Activated naive CD4-positive, alpha-beta T cell treated with anti-CD3 and anti-CD28 coated beads for 36 hours (primary cell): ENCODE measurements at regions of chr4 and their contacts with region 1.

Region 1: GRCh38 chr4:110193822-110194761 is 4.3 kb downstream of the ELOVL6 start:
- DNase-seq: peak; percentile 92
- H3K4me3 Mint-ChIP-seq: peak overlapping the region; percentile 54
- H3K27ac Mint-ChIP-seq: peak overlapping the region; percentile 95
- H3K4me1 Mint-ChIP-seq: peaks cover 31% of the 10 kb centered on the region
- H3K27me3 Mint-ChIP-seq: no peaks in the 10 kb centered on the region

Region 2: GRCh38 chr4:108620101-108620932 is 1573.8 kb before region 1 on chr4 and contains the start of gene RPL34:
- CTCF ChIA-PET with region 1: no interaction called
- intact Hi-C with region 1: loop called (anchors 10 kb)
- DNase-seq: peak; percentile 99
- H3K4me3 Mint-ChIP-seq: peak within 1 kb of the TSS; percentile 93
- H3K27ac Mint-ChIP-seq: peak within 1 kb of the TSS; percentile 95
- H3K4me1 Mint-ChIP-seq: peaks cover 45% of the 10 kb centered on the region
- H3K27me3 Mint-ChIP-seq: no peaks in the 10 kb centered on the region
- total RNA-seq, gene RPL34: 1,983 to 2,004 TPM

Region 3: GRCh38 chr4:109046471-109047201 is 1147.5 kb before region 1 on chr4:
- CTCF ChIA-PET with region 1: no interaction called
- intact Hi-C with region 1: no loop called
- DNase-seq: no peak
- H3K4me3 Mint-ChIP-seq: no peak overlapping the region
- H3K27ac Mint-ChIP-seq: no peak overlapping the region
- H3K4me1 Mint-ChIP-seq: peaks cover 7% of the 10 kb centered on the region
- H3K27me3 Mint-ChIP-seq: no peaks in the 10 kb centered on the region

Region 4: GRCh38 chr4:109648266-109648996 is 545.7 kb before region 1 on chr4:
- CTCF ChIA-PET with region 1: no interaction called
- intact Hi-C with region 1: loop called (anchors 5 kb)
- DNase-seq: no peak
- H3K4me3 Mint-ChIP-seq: peak overlapping the region; percentile 59
- H3K27ac Mint-ChIP-seq: peak overlapping the region; percentile 77
- H3K4me1 Mint-ChIP-seq: peaks cover 45% of the 10 kb centered on the region
- H3K27me3 Mint-ChIP-seq: no peaks in the 10 kb centered on the region

Region 5: GRCh38 chr4:110005461-110006056 is 188.5 kb before region 1 on chr4:
- CTCF ChIA-PET with region 1: no interaction called
- intact Hi-C with region 1: loop called (anchors 5 kb)
- DNase-seq: no peak
- H3K4me3 Mint-ChIP-seq: no peak overlapping the region
- H3K27ac Mint-ChIP-seq: no peak overlapping the region
- H3K4me1 Mint-ChIP-seq: peaks cover 8% of the 10 kb centered on the region
- H3K27me3 Mint-ChIP-seq: peaks cover 3% of the 10 kb centered on the region

Region 6: DNA sequence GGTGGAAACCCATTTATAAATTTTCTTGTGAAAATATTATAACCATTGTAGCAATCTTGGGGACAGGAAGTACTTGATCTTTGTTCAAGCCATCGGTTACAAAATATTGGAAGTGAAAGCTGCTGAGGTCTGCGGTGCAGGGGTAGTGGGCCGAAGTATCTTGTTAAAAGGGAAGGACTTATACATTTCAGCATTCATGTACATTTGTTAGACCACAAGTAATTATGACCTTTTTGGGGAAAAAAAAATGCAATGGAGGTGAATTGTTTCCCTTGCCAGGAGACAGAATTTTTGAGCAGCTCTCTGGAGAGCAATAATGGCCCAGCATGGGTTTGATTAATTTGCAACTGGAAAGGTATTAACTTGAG is 160.1 kb before region 1 on chr4:
- CTCF ChIA-PET with region 1: no interaction called
- intact Hi-C with region 1: no loop called
- DNase-seq: no peak
- H3K4me3 Mint-ChIP-seq: no peak overlapping the region
- H3K27ac Mint-ChIP-seq: no peak overlapping the region
- H3K4me1 Mint-ChIP-seq: peaks cover 2% of the 10 kb centered on the region
- H3K27me3 Mint-ChIP-seq: peaks cover 13% of the 10 kb centered on the region

Region 7: GRCh38 chr4:110165382-110166285 is 28.5 kb before region 1 on chr4:
- CTCF ChIA-PET with region 1: no interaction called
- intact Hi-C with region 1: loop called (anchors 1 kb)
- DNase-seq: peak; percentile 85
- H3K4me3 Mint-ChIP-seq: peak overlapping the region; percentile 54
- H3K27ac Mint-ChIP-seq: peak overlapping the region; percentile 95
- H3K4me1 Mint-ChIP-seq: peaks cover 35% of the 10 kb centered on the region
- H3K27me3 Mint-ChIP-seq: no peaks in the 10 kb centered on the region

Region 8: DNA sequence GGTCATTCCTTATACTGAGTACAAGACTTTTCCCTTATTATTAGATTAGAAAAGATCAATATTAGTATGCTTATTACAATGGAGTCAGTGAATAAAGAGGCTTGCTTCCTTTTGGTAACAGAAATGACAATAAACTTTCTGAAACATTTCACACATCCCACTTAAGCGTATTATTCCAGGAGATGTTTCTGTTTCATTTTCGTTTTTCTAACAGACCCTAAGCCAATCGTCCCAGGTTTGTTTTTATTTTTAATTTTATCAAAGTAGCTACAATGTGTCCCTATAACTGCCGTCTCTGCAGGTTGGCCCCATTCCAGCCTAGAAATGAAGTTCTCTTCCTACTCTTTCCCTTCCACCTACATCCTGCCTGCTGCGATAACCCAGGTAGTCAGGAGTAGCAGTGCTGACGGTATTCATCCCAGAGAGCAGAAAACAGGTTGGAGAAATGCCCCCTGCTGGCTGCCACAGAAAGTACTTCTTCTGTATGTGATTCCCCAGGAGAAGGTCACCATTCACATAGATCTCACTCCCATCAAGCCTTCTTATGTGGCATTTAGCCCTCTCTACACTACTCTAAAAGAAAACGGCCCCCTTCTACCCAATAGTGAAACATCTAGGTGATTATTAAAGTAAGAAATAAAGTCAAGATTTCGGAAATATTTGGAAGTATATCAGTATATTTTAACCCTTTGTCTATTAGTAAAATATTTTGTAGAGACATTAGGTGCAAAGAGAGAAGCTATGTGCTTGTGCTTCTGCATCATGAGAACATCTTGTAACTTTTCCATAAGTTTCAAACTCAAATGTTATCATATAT is 322.2 kb after region 1 on chr4:
- CTCF ChIA-PET with region 1: interaction called, 5 read pairs
- intact Hi-C with region 1: loop called (anchors 5 kb)
- DNase-seq: peak; percentile 76
- H3K4me3 Mint-ChIP-seq: peak overlapping the region; percentile 79
- H3K27ac Mint-ChIP-seq: no peak overlapping the region
- H3K4me1 Mint-ChIP-seq: peaks cover 9% of the 10 kb centered on the region
- H3K27me3 Mint-ChIP-seq: no peaks in the 10 kb centered on the region

Region 9: GRCh38 chr4:111268769-111269414 is 1074.8 kb after region 1 on chr4:
- CTCF ChIA-PET with region 1: no interaction called
- intact Hi-C with region 1: no loop called
- DNase-seq: no peak
- H3K4me3 Mint-ChIP-seq: no peak overlapping the region
- H3K27ac Mint-ChIP-seq: no peak overlapping the region
- H3K4me1 Mint-ChIP-seq: no peaks in the 10 kb centered on the region
- H3K27me3 Mint-ChIP-seq: no peaks in the 10 kb centered on the region